ENCODE measurements at regions of chr1 and their contacts with region 1.

Region 1: DNA sequence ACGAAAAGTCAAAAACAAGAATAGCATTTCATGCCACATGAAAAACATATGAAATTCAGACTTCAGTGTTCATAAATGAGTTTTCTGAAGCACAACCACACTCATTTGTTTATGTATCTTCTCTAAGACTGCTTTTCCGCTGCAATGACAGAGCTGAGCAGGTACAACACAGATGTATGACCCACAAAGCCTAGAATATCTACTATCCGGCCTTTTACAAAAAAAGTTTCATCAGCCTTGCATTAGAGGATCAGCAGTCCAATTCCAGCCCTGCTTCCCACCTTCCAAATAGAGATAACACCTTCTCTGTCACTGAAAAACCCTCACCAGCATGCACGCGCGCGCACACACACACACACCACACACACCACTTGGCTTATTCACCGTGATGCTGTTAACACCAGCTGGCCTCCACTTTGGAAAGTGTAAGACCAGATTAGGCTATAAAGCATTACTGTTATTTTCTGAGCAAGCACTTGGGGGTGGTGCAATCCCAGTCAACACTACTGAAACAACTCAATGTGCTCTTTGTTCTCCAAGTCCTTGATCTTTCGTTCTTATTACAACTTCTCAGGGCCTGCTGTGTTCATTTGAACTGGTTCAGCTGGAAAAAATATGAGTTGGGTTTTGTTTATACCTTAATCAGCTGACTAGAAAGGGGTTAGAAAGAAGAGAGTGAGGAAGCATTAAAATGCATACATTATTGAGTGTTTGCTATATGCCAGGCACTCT is 90.0 kb downstream of the GLUL start:
- DNase-seq: peak in 4 of 5 donors; percentile 30 to 77 (median 32)
- ATAC-seq: peak; percentile 57 to 92 (median 86)
- H3K4me3 ChIP-seq: no peak overlapping the region
- H3K27ac ChIP-seq: peak overlapping the region in 7 of 12 donors; percentile 23 to 64 (median 46)
- H3K4me1 ChIP-seq: peaks cover 0 to 29% (median 6%) of the 10 kb centered on the region in 12 donors
- H3K27me3 ChIP-seq: no peaks in the 10 kb centered on the region
- CTCF ChIP-seq: peak in 3 of 12 donors; percentile 25 to 37 (median 28)
- POLR2A ChIP-seq: no peak

Region 2: GRCh38 chr1:182149411-182149965 is 152.1 kb before region 1 on chr1:
- intact Hi-C with region 1: loop called in 5 of 10 experiments (anchors 5 to 10 kb)
- DNase-seq: peak in 4 of 5 donors; percentile 35 to 58 (median 50)
- ATAC-seq: peak; percentile 50 to 86 (median 82)
- H3K4me3 ChIP-seq: no peak overlapping the region
- H3K27ac ChIP-seq: peak overlapping the region in 4 of 12 donors; percentile 40 to 97 (median 44)
- H3K4me1 ChIP-seq: peaks cover 0 to 66% (median 8%) of the 10 kb centered on the region in 12 donors
- H3K27me3 ChIP-seq: no peaks in the 10 kb centered on the region
- CTCF ChIP-seq: no peak
- POLR2A ChIP-seq: no peak

Region 3: GRCh38 chr1:182185813-182186756 is 115.5 kb before region 1 on chr1:
- intact Hi-C with region 1: no loop called
- DNase-seq: no peak
- ATAC-seq: no peak
- H3K4me3 ChIP-seq: no peak overlapping the region
- H3K27ac ChIP-seq: no peak overlapping the region
- H3K4me1 ChIP-seq: peaks cover 0 to 23% (median 0%) of the 10 kb centered on the region in 12 donors
- H3K27me3 ChIP-seq: no peaks in the 10 kb centered on the region
- CTCF ChIP-seq: no peak
- POLR2A ChIP-seq: no peak

Region 4: GRCh38 chr1:182206626-182207239 is 94.9 kb before region 1 on chr1:
- intact Hi-C with region 1: loop called in 1 of 10 experiments (anchors 5 kb)
- DNase-seq: peak; percentile 42 to 73 (median 62)
- ATAC-seq: peak; percentile 91 to 92 (median 91)
- H3K4me3 ChIP-seq: no peak overlapping the region
- H3K27ac ChIP-seq: peak overlapping the region in 11 of 12 donors; percentile 9 to 76 (median 62)
- H3K4me1 ChIP-seq: peaks cover 0 to 10% (median 0%) of the 10 kb centered on the region in 12 donors
- H3K27me3 ChIP-seq: no peaks in the 10 kb centered on the region
- CTCF ChIP-seq: no peak
- POLR2A ChIP-seq: no peak

Region 5: GRCh38 chr1:182268669-182269068 is 33.0 kb before region 1 on chr1:
- intact Hi-C with region 1: no loop called
- DNase-seq: no peak
- ATAC-seq: no peak
- H3K4me3 ChIP-seq: no peak overlapping the region
- H3K27ac ChIP-seq: peak overlapping the region in 1 of 12 donors; percentile 8
- H3K4me1 ChIP-seq: peaks cover 0 to 18% (median 0%) of the 10 kb centered on the region in 12 donors
- H3K27me3 ChIP-seq: no peaks in the 10 kb centered on the region
- CTCF ChIP-seq: no peak
- POLR2A ChIP-seq: no peak

Region 6: GRCh38 chr1:182279724-182280503 is 21.7 kb before region 1 on chr1:
- intact Hi-C with region 1: no loop called
- DNase-seq: peak in 1 of 5 donors; percentile 59
- ATAC-seq: peak in 3 of 4 donors; percentile 39 to 68 (median 62)
- H3K4me3 ChIP-seq: no peak overlapping the region
- H3K27ac ChIP-seq: peak overlapping the region in 2 of 12 donors; percentile 13 to 25
- H3K4me1 ChIP-seq: peaks cover 0 to 12% (median 2%) of the 10 kb centered on the region in 12 donors
- H3K27me3 ChIP-seq: no peaks in the 10 kb centered on the region
- CTCF ChIP-seq: no peak
- POLR2A ChIP-seq: no peak

Region 7: GRCh38 chr1:182397771-182398393 is 96.2 kb after region 1 on chr1:
- intact Hi-C with region 1: loop called in 6 of 10 experiments (anchors 5 to 10 kb)
- DNase-seq: no peak
- ATAC-seq: no peak
- H3K4me3 ChIP-seq: no peak overlapping the region
- H3K27ac ChIP-seq: no peak overlapping the region
- H3K4me1 ChIP-seq: peaks cover 0 to 38% (median 11%) of the 10 kb centered on the region in 12 donors
- H3K27me3 ChIP-seq: no peaks in the 10 kb centered on the region
- CTCF ChIP-seq: no peak
- POLR2A ChIP-seq: no peak